Activated B cell treated with CpG ODN at 0.5 μM for 24 hours (primary cell): ENCODE measurements at regions of chr1 and their contacts with region 1.

Region 1: DNA sequence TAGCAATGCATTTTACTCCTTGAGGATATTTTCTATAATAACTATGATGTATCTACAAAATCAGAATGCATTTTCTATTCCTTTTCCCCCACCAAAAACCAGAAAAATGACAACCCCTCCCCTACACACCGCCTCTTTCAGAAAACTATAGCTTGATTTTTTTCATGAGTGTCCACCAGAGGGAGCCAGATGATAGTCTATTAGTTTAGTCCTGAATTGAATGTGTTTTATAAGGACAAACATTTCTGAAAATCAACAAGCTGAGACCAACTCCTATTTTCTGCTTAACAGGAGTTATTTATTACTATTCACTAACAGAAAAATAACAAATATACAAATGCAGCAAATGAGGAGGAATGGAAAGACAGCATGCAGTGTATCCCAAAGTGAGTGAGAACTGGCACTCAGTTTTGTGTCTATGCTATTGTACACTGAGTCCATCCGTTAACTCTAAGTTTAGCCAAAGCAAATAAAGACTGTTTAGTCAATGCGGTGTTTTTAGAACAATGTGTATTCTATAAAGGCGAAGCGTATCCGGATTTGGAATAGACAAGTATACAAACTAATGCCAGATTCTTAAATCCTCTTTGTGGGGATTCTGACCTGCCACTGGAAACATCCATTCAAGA is 182.6 kb downstream of the VAV3 start:
- DNase-seq: no peak
- ATAC-seq: peak; percentile 19
- H3K4me3 Mint-ChIP-seq: no peak overlapping the region
- H3K27ac Mint-ChIP-seq: no peak overlapping the region
- H3K4me1 Mint-ChIP-seq: peaks cover 54% of the 10 kb centered on the region
- H3K27me3 Mint-ChIP-seq: no peaks in the 10 kb centered on the region
- CTCF ChIP-seq: peak; percentile 83

Region 2: DNA sequence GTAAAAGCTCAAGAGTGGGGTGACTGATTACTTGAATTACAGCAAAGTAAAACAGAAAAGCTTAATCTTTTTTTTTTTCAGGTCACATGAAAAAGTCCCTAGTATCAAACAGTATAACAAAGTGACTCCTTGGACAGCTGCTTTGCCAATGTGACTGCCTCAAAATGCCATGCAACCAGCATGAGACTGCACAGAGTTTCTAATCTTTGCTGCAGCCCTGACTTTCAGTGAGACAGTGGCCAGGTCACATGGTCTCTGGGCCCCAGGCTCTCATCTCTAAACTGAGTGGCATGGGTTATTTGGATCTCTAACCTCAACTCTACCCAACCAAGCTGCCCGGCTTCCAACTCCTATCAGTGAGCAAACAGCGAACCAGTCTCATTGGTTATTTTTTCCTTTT is 13.7 kb after region 1 on chr1:
- CTCF ChIA-PET with region 1: interaction called, 16 read pairs
- POLR2A ChIA-PET with region 1: interaction called, 3 read pairs
- intact Hi-C with region 1: loop called (anchors 1 kb)
- DNase-seq: no peak
- ATAC-seq: peak; percentile 68
- H3K4me3 Mint-ChIP-seq: peak overlapping the region; percentile 73
- H3K27ac Mint-ChIP-seq: peak overlapping the region; percentile 90
- H3K4me1 Mint-ChIP-seq: peaks cover 80% of the 10 kb centered on the region
- H3K27me3 Mint-ChIP-seq: no peaks in the 10 kb centered on the region
- CTCF ChIP-seq: no peak

Region 3: DNA sequence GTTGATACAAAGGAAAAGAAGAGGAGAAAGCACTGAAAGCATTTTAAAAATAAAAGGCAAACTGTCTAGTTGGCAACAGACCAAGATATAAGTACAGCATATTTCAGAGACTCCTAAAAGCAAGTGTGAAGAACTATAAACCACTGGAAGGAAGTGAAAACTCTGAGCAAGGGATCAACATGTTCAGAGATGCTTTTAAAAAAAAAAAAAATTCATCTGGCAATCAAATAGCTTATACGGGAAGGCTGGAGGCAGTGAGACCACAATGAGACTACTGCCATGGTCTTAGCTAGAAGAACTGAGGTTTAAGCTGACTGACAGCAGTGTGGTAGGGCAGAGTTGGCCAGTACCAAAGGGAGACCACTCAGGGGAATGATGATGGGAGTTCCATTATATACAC is 58.4 kb after region 1 on chr1:
- CTCF ChIA-PET with region 1: interaction called, 9 read pairs
- POLR2A ChIA-PET with region 1: interaction called, 3 read pairs
- intact Hi-C with region 1: loop called (anchors 2 kb)
- DNase-seq: no peak
- ATAC-seq: peak; percentile 46
- H3K4me3 Mint-ChIP-seq: peak overlapping the region; percentile 67
- H3K27ac Mint-ChIP-seq: peak overlapping the region; percentile 75
- H3K4me1 Mint-ChIP-seq: peaks cover 89% of the 10 kb centered on the region
- H3K27me3 Mint-ChIP-seq: no peaks in the 10 kb centered on the region
- CTCF ChIP-seq: no peak

Region 4: GRCh38 chr1:107936498-107937481 is 154.5 kb after region 1 on chr1:
- CTCF ChIA-PET with region 1: interaction called, 9 read pairs
- POLR2A ChIA-PET with region 1: no interaction called
- intact Hi-C with region 1: loop called (anchors 1 kb)
- DNase-seq: no peak
- ATAC-seq: peak; percentile 51
- H3K4me3 Mint-ChIP-seq: peak overlapping the region; percentile 69
- H3K27ac Mint-ChIP-seq: peak overlapping the region; percentile 70
- H3K4me1 Mint-ChIP-seq: peaks cover 87% of the 10 kb centered on the region
- H3K27me3 Mint-ChIP-seq: no peaks in the 10 kb centered on the region
- CTCF ChIP-seq: no peak

Region 5: DNA sequence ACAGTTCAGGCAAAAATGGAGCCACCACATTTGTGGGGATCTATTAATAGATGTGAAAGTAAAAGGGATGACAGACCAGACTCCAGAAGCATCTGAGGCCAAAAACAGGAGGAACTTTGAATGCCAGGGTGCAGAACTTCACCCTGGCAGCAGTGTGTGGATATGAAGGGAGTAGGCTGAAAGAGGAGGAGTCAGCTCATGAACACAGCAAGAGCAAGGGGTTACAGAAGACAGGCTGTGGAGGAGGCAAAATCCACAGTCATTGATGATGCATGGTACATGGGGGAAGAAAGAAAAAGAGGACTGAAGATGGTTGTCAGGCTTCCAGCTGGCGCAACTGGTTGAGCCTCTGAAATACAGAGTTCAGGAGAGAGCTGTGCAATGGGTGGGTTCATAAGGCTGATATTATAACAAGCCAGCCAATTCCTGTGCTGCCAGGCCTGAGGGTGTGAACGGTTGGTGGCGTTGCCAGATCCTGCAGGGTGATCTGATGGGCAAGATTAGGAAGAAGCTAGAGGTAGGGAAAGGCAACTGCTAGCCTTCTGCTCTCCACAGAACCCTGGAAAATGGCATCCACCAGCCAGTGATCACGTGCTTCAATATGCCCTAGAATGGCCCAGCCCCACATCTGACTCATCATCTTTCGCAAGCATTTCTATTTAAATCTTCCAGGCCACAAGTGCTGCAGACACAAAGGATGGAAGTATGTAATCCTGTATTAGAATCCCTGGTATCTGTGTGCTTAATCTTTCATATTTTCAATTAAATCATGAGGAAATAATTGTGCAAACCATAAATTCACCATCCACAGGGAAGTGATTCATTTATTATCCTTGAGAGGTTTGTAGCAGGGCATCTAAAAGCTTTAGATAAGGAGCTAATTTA is 335.9 kb after region 1 on chr1:
- CTCF ChIA-PET with region 1: interaction called, 488 read pairs
- POLR2A ChIA-PET with region 1: no interaction called
- intact Hi-C with region 1: no loop called
- DNase-seq: no peak
- ATAC-seq: no peak
- H3K4me3 Mint-ChIP-seq: no peak overlapping the region
- H3K27ac Mint-ChIP-seq: no peak overlapping the region
- H3K4me1 Mint-ChIP-seq: peaks cover 19% of the 10 kb centered on the region
- H3K27me3 Mint-ChIP-seq: no peaks in the 10 kb centered on the region
- CTCF ChIP-seq: no peak

Region 6: GRCh38 chr1:108199781-108200570 is 417.6 kb after region 1 on chr1 and contains the start of gene SLC25A24:
- CTCF ChIA-PET with region 1: interaction called, 14 read pairs
- POLR2A ChIA-PET with region 1: no interaction called
- intact Hi-C with region 1: loop called (anchors 5 kb)
- DNase-seq: peak; percentile 85
- ATAC-seq: peak; percentile 94
- H3K4me3 Mint-ChIP-seq: peak within 1 kb of the TSS; percentile 93
- H3K27ac Mint-ChIP-seq: peak within 1 kb of the TSS; percentile 86
- H3K4me1 Mint-ChIP-seq: peaks cover 29% of the 10 kb centered on the region
- H3K27me3 Mint-ChIP-seq: no peaks in the 10 kb centered on the region
- CTCF ChIP-seq: no peak
- total RNA-seq, gene SLC25A24: 20.2 and 22.1 TPM in 2 replicates